ENCODE measurements at regions of chr7 and their contacts with region 1.

Region 1: DNA sequence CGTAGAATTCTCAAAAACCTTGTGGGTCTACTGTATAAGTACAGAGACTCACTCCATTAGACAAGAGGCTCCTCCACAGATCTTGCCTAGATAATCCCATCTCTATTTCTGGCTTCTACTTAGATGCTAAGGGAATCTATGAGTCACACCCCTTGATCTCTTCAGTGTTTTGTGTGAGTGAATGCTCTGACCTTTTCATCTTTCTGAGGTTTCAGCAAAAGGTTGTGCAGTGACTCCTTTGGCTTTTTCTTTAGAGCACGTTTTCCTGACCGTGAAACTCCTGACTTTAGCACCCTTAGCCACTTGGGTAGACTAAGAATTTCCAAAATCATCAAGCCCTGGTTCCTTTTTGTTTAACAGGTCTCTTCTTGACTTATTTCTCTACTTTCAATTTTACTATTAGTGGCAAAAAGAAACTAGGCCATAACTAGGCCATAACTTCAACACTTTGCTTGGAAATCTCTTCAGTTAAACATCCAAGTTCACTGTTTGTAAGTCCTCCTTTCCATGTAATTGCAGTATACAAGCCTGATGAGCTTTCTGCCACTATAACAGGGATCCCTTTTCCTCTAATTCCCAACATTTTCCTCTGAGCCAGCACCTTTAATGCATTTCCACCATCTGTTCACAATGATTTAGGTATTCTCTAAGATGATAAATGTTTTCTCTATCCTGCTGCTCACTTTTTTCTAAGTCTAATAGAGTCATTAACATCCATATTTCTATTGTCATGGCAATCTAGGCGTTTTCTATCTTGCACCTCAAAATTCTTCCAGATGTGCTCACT is 19.4 kb downstream of the COPG2 start:
- DNase-seq: peak; percentile 67
- H3K4me3 Mint-ChIP-seq: peak overlapping the region; percentile 50
- H3K27ac Mint-ChIP-seq: peak overlapping the region; percentile 86
- H3K4me1 Mint-ChIP-seq: peaks cover 35% of the 10 kb centered on the region
- H3K27me3 Mint-ChIP-seq: no peaks in the 10 kb centered on the region

Region 2: DNA sequence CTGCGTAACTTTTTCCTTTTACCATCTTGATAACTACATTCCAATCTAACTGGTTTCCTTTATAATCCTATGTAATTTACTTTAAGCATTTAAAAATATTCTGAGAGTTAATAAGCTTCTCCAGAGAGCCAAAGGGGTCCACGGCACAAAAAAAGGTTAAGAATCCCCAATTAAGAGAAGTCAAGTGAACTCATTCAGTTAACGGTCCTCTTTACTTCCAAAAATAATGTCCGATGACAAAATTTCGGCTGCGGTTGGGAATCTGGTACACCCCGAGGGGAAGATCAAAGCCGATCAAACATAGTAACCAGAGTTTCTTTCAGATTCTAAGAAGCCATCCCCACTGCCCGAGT is 598.4 kb before region 1 on chr7:
- intact Hi-C with region 1: loop called (anchors 5 kb)
- DNase-seq: no peak
- H3K4me3 Mint-ChIP-seq: peak overlapping the region; percentile 99
- H3K27ac Mint-ChIP-seq: peak overlapping the region; percentile 98
- H3K4me1 Mint-ChIP-seq: peaks cover 10% of the 10 kb centered on the region
- H3K27me3 Mint-ChIP-seq: no peaks in the 10 kb centered on the region

Region 3: DNA sequence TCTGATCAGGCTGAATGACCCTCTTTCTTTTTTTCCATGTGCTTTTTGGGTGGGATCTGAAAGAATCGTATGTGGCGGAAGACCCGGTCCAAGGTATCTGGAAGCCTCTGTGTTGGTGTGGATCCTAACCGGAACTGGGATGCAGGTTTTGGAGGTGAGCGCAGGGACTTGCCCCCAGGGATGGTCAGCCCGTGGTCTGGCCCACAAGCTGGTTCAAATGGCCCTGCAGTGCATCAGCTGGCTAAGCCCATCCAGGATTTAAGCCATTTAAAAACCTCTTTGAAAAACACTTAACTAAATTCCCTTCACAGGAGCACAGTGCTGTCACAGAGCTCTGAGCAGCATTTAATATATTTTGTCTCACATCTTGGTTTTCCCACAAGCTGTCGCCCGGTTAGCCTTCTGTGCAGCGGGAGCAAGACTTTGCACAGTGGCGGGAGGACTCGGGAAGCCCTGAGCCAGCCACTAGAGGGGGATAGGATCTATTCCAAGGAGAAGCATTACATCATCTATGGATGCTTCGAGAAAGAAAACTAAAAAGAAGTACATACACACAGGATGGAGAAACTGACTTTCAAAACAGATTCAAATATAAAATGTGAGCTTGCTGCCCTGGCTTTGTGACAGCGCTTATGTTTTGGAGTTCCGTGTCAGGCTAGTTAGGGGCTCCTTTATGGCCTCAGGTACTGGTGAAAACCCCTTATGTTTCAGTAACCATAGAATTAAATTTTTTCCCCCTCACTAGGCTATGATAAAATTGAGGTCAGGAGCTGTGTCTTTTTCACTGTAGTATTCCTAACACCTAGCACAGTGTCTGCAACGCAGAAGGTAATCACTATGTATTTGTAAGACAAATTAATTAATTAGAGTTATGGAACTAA is 371.2 kb before region 1 on chr7:
- intact Hi-C with region 1: loop called (anchors 1 kb)
- DNase-seq: no peak
- H3K4me3 Mint-ChIP-seq: peak overlapping the region; percentile 29
- H3K27ac Mint-ChIP-seq: peak overlapping the region; percentile 87
- H3K4me1 Mint-ChIP-seq: peaks cover 20% of the 10 kb centered on the region
- H3K27me3 Mint-ChIP-seq: no peaks in the 10 kb centered on the region

Region 4: GRCh38 chr7:130440527-130441365 is 208.5 kb before region 1 on chr7 and contains the start of gene CEP41:
- intact Hi-C with region 1: loop called (anchors 10 kb)
- DNase-seq: peak; percentile 97
- H3K4me3 Mint-ChIP-seq: peak within 1 kb of the TSS; percentile 99
- H3K27ac Mint-ChIP-seq: peak within 1 kb of the TSS; percentile 99
- H3K4me1 Mint-ChIP-seq: peaks cover 37% of the 10 kb centered on the region
- H3K27me3 Mint-ChIP-seq: no peaks in the 10 kb centered on the region
- total RNA-seq, gene CEP41: 14.3 and 16.7 TPM in 2 replicates

Region 5: DNA sequence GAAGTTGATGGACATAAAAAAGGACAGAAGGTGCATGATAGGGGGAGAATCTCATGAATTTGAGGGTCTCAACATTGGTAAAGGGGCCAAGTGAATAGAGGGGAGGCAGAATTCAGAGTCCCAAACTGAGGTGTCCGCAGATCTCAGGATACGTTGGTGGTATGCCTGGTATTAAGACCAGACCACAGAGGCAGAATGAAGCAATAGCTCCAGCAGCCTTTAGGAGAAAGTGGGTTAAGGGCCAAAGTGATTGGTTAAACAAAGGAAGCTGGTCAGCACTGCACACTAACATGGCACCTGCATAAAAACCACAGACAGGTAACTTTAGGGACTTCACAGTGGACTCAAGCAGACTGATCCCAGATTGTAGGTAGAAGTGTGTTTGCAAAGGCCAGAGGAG is 119.8 kb before region 1 on chr7:
- intact Hi-C with region 1: no loop called
- DNase-seq: no peak
- H3K4me3 Mint-ChIP-seq: no peak overlapping the region
- H3K27ac Mint-ChIP-seq: no peak overlapping the region
- H3K4me1 Mint-ChIP-seq: peaks cover 6% of the 10 kb centered on the region
- H3K27me3 Mint-ChIP-seq: no peaks in the 10 kb centered on the region

Region 6: GRCh38 chr7:130721486-130722280 is 72.5 kb after region 1 on chr7:
- intact Hi-C with region 1: no loop called
- DNase-seq: peak; percentile 60
- H3K4me3 Mint-ChIP-seq: no peak overlapping the region
- H3K27ac Mint-ChIP-seq: no peak overlapping the region
- H3K4me1 Mint-ChIP-seq: no peaks in the 10 kb centered on the region
- H3K27me3 Mint-ChIP-seq: peaks cover 19% of the 10 kb centered on the region

Region 7: GRCh38 chr7:131027287-131027773 is 378.1 kb after region 1 on chr7:
- intact Hi-C with region 1: loop called (anchors 5 kb)
- DNase-seq: peak; percentile 76
- H3K4me3 Mint-ChIP-seq: peak overlapping the region; percentile 40
- H3K27ac Mint-ChIP-seq: peak overlapping the region; percentile 83
- H3K4me1 Mint-ChIP-seq: peaks cover 56% of the 10 kb centered on the region
- H3K27me3 Mint-ChIP-seq: no peaks in the 10 kb centered on the region